ENCODE measurements at regions of chr17 and their contacts with region 1.

Region 1: GRCh38 chr17:16353317-16354174 is at the start of gene CENPV:
- DNase-seq: peak; percentile 64 to 71 (median 66)
- H3K4me3 ChIP-seq: peak within 1 kb of the TSS; percentile 44 to 66
- H3K4me3 Mint-ChIP-seq: peak within 1 kb of the TSS; percentile 91 to 97 (median 94)
- H3K27ac ChIP-seq: peak within 1 kb of the TSS; percentile 47
- H3K27ac Mint-ChIP-seq: peak within 1 kb of the TSS; percentile 45 to 91 (median 79)
- H3K4me1 ChIP-seq: peaks cover 12% of the 10 kb centered on the region
- H3K4me1 Mint-ChIP-seq: peaks cover 9 to 17% (median 15%) of the 10 kb centered on the region in 4 donors
- H3K27me3 ChIP-seq: no peaks in the 10 kb centered on the region
- H3K27me3 Mint-ChIP-seq: no peaks in the 10 kb centered on the region
- total RNA-seq, gene CENPV: 8.4 to 8.6 TPM

Region 2: GRCh38 chr17:16215273-16215964 is 138.1 kb before region 1 on chr17 and contains the start of gene NCOR1:
- CTCF ChIA-PET with region 1: interaction called, 5 read pairs
- POLR2A ChIA-PET with region 1: interaction called, 11 read pairs
- intact Hi-C with region 1: loop called (anchors 2 kb)
- DNase-seq: peak; percentile 82 to 89 (median 84)
- H3K4me3 ChIP-seq: peak within 1 kb of the TSS; percentile 59 to 80
- H3K4me3 Mint-ChIP-seq: peak within 1 kb of the TSS; percentile 93 to 100 (median 97)
- H3K27ac ChIP-seq: peak within 1 kb of the TSS; percentile 87
- H3K27ac Mint-ChIP-seq: peak within 1 kb of the TSS; percentile 88 to 98 (median 94)
- H3K4me1 ChIP-seq: peaks cover 59% of the 10 kb centered on the region
- H3K4me1 Mint-ChIP-seq: peaks cover 28 to 65% (median 38%) of the 10 kb centered on the region in 4 donors
- H3K27me3 ChIP-seq: no peaks in the 10 kb centered on the region
- H3K27me3 Mint-ChIP-seq: no peaks in the 10 kb centered on the region
- total RNA-seq, gene NCOR1: 156 to 169 TPM

Region 3: GRCh38 chr17:16269658-16270057 is 83.9 kb before region 1 on chr17:
- CTCF ChIA-PET with region 1: interaction called, 4 read pairs
- POLR2A ChIA-PET with region 1: interaction called, 7 read pairs
- intact Hi-C with region 1: loop called (anchors 2 kb)
- DNase-seq: no peak
- H3K4me3 ChIP-seq: no peak overlapping the region
- H3K4me3 Mint-ChIP-seq: peak overlapping the region in 5 of 8 donors; percentile 12 to 40 (median 28)
- H3K27ac ChIP-seq: no peak overlapping the region
- H3K27ac Mint-ChIP-seq: peak overlapping the region in 4 of 7 donors; percentile 42 to 70 (median 47)
- H3K4me1 ChIP-seq: peaks cover 35% of the 10 kb centered on the region
- H3K4me1 Mint-ChIP-seq: peaks cover 20 to 46% (median 31%) of the 10 kb centered on the region in 4 donors
- H3K27me3 ChIP-seq: no peaks in the 10 kb centered on the region
- H3K27me3 Mint-ChIP-seq: no peaks in the 10 kb centered on the region

Region 4: GRCh38 chr17:16297367-16298139 is 56.0 kb before region 1 on chr17:
- CTCF ChIA-PET with region 1: no interaction called
- POLR2A ChIA-PET with region 1: no interaction called
- intact Hi-C with region 1: no loop called
- DNase-seq: no peak
- H3K4me3 ChIP-seq: no peak overlapping the region
- H3K4me3 Mint-ChIP-seq: no peak overlapping the region
- H3K27ac ChIP-seq: no peak overlapping the region
- H3K27ac Mint-ChIP-seq: peak overlapping the region in 3 of 7 donors; percentile 16 to 61 (median 52)
- H3K4me1 ChIP-seq: peaks cover 15% of the 10 kb centered on the region
- H3K4me1 Mint-ChIP-seq: peaks cover 14 to 32% (median 18%) of the 10 kb centered on the region in 4 donors
- H3K27me3 ChIP-seq: no peaks in the 10 kb centered on the region
- H3K27me3 Mint-ChIP-seq: no peaks in the 10 kb centered on the region

Region 5: DNA sequence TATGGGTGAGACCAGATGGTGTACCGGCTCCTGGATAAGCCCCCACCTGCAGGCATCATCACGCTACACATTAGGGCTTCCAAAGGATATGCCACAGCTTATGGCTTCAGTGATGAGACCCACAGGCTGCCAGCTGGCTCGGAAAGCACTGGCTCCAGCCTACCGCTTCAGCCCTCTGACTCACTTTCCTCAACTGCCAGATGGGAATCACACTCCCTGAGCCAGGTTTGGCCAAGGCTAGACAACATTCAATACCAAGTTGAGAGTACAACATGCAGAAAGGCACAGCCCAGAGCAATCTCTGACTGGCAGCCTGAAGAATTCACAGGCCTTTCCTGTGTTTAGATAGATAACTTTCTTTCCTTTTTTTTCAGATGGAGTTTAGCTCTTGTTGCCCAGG is 10.6 kb before region 1 on chr17:
- CTCF ChIA-PET with region 1: interaction called, 11 read pairs
- POLR2A ChIA-PET with region 1: no interaction called
- intact Hi-C with region 1: no loop called
- DNase-seq: no peak
- H3K4me3 ChIP-seq: no peak overlapping the region
- H3K4me3 Mint-ChIP-seq: no peak overlapping the region
- H3K27ac ChIP-seq: no peak overlapping the region
- H3K27ac Mint-ChIP-seq: no peak overlapping the region
- H3K4me1 ChIP-seq: no peaks in the 10 kb centered on the region
- H3K4me1 Mint-ChIP-seq: no peaks in the 10 kb centered on the region
- H3K27me3 ChIP-seq: no peaks in the 10 kb centered on the region
- H3K27me3 Mint-ChIP-seq: no peaks in the 10 kb centered on the region